ENCODE measurements at regions of chr6 and their contacts with region 1.

Region 1: GRCh38 chr6:797479-798077 is 104.6 kb upstream of the EXOC2 start:
- DNase-seq: peak in 1 of 2 donors; percentile 46
- H3K4me3 ChIP-seq: no peak overlapping the region
- CTCF ChIP-seq: peak in 1 of 3 donors; percentile 13
- POLR2A ChIP-seq: no peak

Region 2: GRCh38 chr6:1381481-1382330 is 584.1 kb after region 1 on chr6:
- intact Hi-C with region 1: loop called (anchors 2 kb)
- DNase-seq: no peak
- H3K4me3 ChIP-seq: no peak overlapping the region
- CTCF ChIP-seq: no peak
- POLR2A ChIP-seq: no peak

Measured in lower leg skin (tissue), 4 donors.